ENCODE measurements at regions of chr2 and their contacts with region 1.

Region 1: GRCh38 chr2:232444409-232445148 is 11.4 kb upstream of the ALPI start:
- DNase-seq: no peak
- ATAC-seq: peak; percentile 76
- H3K4me3 ChIP-seq: no peak overlapping the region
- H3K27ac ChIP-seq: no peak overlapping the region
- H3K4me1 ChIP-seq: no peaks in the 10 kb centered on the region; the same call in 1 of the 2 replicates
- H3K27me3 ChIP-seq: no peaks in the 10 kb centered on the region; a peak in 1 of 4 replicates
- CTCF ChIP-seq: peak; percentile 56 to 85 (median 83)
- EP300 ChIP-seq: no peak
- POLR2A ChIP-seq: no peak
- RAD21 ChIP-seq: no peak

Region 2: GRCh38 chr2:231854671-231855070 is 589.9 kb before region 1 on chr2:
- CTCF ChIA-PET with region 1: no interaction called
- POLR2A ChIA-PET with region 1: no interaction called
- RAD21 ChIA-PET with region 1: no interaction called
- SMC1A ChIA-PET with region 1: no interaction called
- in situ Hi-C with region 1: no loop called
- intact Hi-C with region 1: loop called (anchors 5 kb)
- DNase-seq: no peak
- ATAC-seq: no peak
- H3K4me3 ChIP-seq: no peak overlapping the region
- H3K27ac ChIP-seq: no peak overlapping the region
- H3K4me1 ChIP-seq: no peaks in the 10 kb centered on the region
- H3K27me3 ChIP-seq: no peaks in the 10 kb centered on the region; a peak in 1 of 4 replicates
- CTCF ChIP-seq: no peak
- EP300 ChIP-seq: no peak
- POLR2A ChIP-seq: no peak
- RAD21 ChIP-seq: no peak

Region 3: DNA sequence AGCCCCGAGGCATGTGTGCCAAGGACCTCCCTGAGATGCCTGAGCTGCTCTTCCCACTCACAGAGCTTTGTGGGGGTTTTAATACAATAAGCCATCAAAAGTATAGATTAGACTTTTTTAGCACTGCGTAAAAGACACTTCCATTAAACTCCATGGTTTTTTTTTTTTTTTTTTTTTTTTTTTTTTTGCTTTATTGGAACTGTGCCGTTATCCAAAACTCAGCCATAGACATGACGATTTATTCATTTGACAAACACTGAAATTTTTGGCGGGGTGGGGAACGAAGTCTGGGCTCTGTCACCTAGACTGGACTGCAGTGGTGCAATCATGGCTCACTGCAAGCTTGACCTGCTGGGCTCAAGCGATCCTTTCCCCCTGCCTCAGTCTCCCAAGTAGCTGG is 536.8 kb before region 1 on chr2:
- CTCF ChIA-PET with region 1: no interaction called
- POLR2A ChIA-PET with region 1: no interaction called
- RAD21 ChIA-PET with region 1: no interaction called
- SMC1A ChIA-PET with region 1: no interaction called
- in situ Hi-C with region 1: no loop called
- intact Hi-C with region 1: loop called (anchors 2 kb)
- DNase-seq: no peak
- ATAC-seq: no peak
- H3K4me3 ChIP-seq: no peak overlapping the region
- H3K27ac ChIP-seq: no peak overlapping the region
- H3K4me1 ChIP-seq: no peaks in the 10 kb centered on the region
- H3K27me3 ChIP-seq: no peaks in the 10 kb centered on the region; a peak in 1 of 4 replicates
- CTCF ChIP-seq: no peak
- EP300 ChIP-seq: no peak
- POLR2A ChIP-seq: no peak
- RAD21 ChIP-seq: no peak

Region 4: GRCh38 chr2:231925303-231926179 is 519.0 kb before region 1 on chr2:
- CTCF ChIA-PET with region 1: no interaction called
- POLR2A ChIA-PET with region 1: no interaction called
- RAD21 ChIA-PET with region 1: no interaction called
- SMC1A ChIA-PET with region 1: no interaction called
- in situ Hi-C with region 1: no loop called
- intact Hi-C with region 1: loop called (anchors 5 kb)
- DNase-seq: no peak
- ATAC-seq: peak; percentile 92
- H3K4me3 ChIP-seq: peak overlapping the region; percentile 74; the same call in 1 of the 2 replicates
- H3K27ac ChIP-seq: no peak overlapping the region
- H3K4me1 ChIP-seq: peaks cover 13% of the 10 kb centered on the region
- H3K27me3 ChIP-seq: peaks cover 6 to 11% of the 10 kb centered on the region in 2 experiments; a peak in 3 of 4 replicates
- CTCF ChIP-seq: peak; percentile 70 to 75 (median 70)
- EP300 ChIP-seq: no peak
- POLR2A ChIP-seq: no peak
- RAD21 ChIP-seq: peak; percentile 64

Region 5: DNA sequence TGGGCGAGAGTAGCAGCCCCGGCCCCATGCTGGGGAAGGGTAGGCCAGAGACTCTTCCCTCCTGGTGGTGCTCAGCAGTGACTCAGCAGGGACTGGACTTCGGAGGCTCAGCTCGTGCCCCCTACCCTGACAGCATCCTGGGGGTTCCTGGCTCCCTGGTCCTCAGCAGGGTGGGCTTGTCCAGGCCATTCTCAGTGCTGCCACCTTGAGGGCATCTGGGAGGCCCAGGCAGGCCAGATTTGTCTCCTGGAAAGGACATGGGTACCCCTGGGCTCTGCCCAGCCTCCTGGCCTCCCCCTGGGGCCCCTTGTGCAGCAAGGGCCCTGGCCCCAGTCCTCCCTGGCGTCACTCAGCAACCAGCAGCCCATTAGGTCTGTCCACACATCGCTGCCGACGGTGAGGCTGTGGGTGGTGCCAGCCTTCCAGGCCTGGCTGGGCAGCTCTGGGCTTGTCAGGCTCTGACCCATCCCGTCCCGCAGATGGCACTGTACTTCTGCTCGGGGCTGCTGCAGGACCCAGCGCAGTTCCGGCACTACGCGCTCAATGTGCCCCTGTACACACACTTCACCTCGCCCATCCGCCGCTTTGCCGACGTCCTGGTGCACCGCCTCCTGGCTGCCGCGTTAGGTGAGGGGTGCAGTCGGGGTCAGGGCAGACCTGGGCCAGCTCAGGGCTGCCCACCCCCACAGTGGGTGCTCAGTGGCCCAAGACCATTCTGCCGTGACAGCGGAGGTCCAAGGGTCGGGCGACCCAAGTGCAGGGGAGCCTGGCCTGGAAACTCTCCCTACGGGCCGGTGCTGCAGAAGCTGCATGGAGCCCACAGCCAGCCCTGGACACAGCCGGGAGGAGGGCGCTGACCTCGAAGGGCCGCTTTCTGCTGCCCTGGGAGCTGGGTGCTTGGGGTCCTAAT is 111.0 kb before region 1 on chr2:
- CTCF ChIA-PET with region 1: interaction called, 3 read pairs
- POLR2A ChIA-PET with region 1: no interaction called
- RAD21 ChIA-PET with region 1: no interaction called
- SMC1A ChIA-PET with region 1: no interaction called
- in situ Hi-C with region 1: no loop called
- intact Hi-C with region 1: loop called (anchors 1 kb)
- DNase-seq: no peak
- ATAC-seq: 0 out of 3 replicates have a peak, but pooled peaks have one; percentile 18
- H3K4me3 ChIP-seq: no peak overlapping the region
- H3K27ac ChIP-seq: no peak overlapping the region
- H3K4me1 ChIP-seq: no peaks in the 10 kb centered on the region
- H3K27me3 ChIP-seq: no peaks in the 10 kb centered on the region
- CTCF ChIP-seq: peak; percentile 15 to 37 (median 26); a peak in 3 of 6 replicates
- EP300 ChIP-seq: no peak
- POLR2A ChIP-seq: no peak
- RAD21 ChIP-seq: no peak

Region 6: DNA sequence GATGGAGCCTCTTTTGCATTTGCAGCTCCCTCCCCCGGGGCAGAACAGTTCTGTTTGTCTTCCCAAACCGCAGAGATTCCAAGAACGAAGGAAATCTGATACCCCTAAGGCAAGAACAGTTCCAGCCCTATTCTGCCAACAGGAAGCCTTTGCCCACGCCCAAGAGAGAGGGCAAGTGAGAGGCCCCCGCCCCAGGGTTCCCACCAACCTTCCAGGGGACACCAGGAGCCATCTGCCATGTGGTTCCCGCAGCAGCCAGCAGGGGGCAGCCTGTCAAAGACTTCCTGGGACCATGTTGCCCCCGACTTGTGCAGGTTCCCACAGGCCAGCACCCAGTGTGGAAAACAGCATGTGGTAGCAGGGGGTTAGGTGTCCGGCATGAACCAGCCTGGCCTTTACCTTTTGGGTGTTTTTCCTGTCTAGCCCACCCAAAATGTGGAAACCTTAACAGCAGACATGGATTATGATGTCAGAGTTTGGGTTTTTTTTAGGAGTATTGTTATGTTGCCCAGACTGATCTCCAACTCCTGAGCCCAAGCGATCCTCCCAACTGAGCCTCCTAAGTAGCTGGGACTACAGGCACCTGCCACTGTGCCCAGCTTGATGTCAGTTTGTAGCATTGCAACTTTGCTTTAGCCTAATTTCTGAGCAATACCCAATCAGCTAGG is 167.1 kb after region 1 on chr2:
- CTCF ChIA-PET with region 1: no interaction called
- POLR2A ChIA-PET with region 1: no interaction called
- RAD21 ChIA-PET with region 1: no interaction called
- SMC1A ChIA-PET with region 1: no interaction called
- in situ Hi-C with region 1: no loop called
- intact Hi-C with region 1: no loop called
- DNase-seq: no peak
- ATAC-seq: peak; percentile 90
- H3K4me3 ChIP-seq: no peak overlapping the region
- H3K27ac ChIP-seq: no peak overlapping the region
- H3K4me1 ChIP-seq: no peaks in the 10 kb centered on the region
- H3K27me3 ChIP-seq: no peaks in the 10 kb centered on the region
- CTCF ChIP-seq: peak; percentile 69 to 94 (median 92)
- EP300 ChIP-seq: no peak
- POLR2A ChIP-seq: no peak
- RAD21 ChIP-seq: peak; percentile 49